HAP-1 (cell line): ENCODE measurements at regions of chr6 and their contacts with region 1.

Region 1: DNA sequence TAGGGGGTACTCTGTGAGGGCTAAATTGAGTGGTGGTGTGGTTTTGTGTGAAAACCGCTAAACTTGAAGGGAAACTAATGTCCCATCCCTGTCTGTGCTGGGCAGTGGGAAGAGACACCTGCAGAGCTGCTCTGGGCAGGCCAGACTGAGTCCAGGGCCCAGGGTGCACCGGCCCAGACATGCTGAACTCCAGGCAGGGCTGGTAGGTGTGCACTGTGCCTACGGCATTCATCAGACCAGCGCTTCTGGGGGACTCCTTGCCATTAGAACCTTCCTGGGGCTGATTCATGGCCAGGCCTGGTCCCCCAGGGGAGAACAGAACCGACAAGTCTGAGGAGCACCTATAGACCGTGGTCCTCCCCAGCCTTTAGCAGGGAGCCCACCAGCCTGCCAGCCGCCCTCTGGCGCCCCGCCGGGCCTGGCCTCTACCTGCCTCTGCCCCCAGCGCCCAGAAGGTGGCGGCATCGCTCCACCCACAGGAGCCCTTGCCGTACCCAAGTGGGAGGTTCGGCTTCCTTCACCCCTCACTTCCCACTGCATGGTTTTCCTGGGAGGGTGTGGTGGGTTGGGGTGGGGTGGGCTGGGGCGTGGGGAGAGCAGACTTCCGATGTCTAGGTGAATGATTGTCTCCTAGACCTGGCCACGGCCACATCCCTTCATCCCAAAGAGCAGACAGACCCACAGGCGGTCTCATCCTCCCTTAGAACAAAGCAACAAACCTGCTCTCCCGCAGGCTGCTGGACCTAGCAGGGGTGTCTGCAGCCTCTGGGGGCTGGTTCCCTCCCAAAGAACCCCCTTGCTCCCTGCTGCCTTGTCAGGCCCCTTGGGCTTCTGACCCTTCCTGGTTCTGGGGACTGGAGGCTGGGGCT is 15.5 kb downstream of the CCDC167 start:
- DNase-seq: peak; percentile 21 to 82
- H3K4me3 ChIP-seq: no peak overlapping the region
- H3K4me1 ChIP-seq: no peaks in the 10 kb centered on the region
- H3K27me3 ChIP-seq: no peaks in the 10 kb centered on the region

Region 2: GRCh38 chr6:37691904-37692806 is 208.0 kb after region 1 on chr6:
- in situ Hi-C with region 1: loop called (anchors 5 kb)
- DNase-seq: peak; percentile 49 to 87
- H3K4me3 ChIP-seq: no peak overlapping the region
- H3K4me1 ChIP-seq: no peaks in the 10 kb centered on the region; the same call in 1 of the 2 replicates
- H3K27me3 ChIP-seq: peaks cover 14% of the 10 kb centered on the region